ENCODE measurements at regions of chr10 and their contacts with region 1.

Region 1: DNA sequence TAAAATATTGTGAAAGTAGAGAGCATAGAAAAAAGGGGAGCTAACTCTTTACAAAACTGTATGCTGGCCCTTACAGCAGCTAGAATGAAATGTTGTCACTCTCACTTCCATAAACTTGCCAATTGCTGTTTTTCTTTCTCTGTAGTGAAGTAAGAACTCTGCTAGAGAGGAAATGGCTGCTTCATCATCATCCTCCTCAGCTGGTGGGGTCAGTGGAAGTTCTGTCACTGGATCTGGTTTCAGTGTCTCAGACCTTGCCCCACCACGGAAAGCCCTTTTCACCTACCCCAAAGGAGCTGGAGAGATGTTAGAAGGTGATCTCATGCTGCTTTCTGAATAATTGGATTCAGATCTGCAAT is 7.6 kb upstream of the ASCC1 start:
- DNase-seq: no peak
- H3K27ac ChIP-seq: no peak overlapping the region
- CTCF ChIP-seq: no peak

Region 2: DNA sequence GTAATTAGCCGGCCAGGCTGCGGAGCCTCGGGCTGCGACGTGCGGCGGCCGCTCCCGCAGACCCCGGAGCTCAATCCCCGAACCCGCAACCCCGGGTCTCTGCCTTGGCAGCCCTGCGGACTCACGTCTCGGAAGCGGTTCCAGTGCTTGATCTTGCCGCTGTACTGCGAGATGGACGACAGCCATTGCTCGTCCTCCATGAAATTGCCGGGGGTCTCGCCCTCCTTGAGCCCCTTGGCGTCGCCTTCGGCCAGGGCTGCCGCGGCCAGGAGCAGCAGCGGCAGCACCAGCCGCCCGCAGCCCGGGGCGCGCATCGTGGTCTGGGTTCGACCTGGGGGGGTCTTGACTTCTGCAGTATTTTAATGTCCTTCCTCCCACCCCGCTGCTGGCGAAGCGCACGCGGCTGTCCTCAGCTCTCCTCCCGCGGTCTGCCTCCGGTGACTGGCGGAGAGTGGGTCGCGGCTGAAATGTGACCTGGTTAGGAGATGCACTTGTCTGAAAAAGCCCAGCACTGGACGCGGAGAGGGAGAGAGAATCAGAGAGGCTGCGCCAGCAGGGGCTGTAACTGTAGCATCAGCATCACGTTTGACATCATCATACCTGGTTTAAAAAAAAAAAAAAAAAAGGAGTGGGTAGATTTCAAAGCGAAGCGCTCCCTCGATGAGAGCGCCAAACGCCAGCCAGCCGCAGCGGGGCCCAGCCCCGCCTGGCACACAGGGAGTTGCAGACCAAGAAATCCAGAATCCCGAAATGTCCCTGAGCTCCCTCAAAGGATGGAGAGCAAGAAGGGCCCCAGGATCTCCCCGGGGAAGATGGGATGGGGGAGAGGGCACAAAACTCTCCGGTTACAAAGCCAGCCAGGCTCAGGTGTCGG is 135.5 kb before region 1 on chr10 and contains the start of gene SPOCK2:
- CTCF ChIA-PET with region 1: no interaction called
- POLR2A ChIA-PET with region 1: no interaction called
- DNase-seq: no peak
- H3K27ac ChIP-seq: no peak within 1 kb of the TSS
- CTCF ChIP-seq: no peak

Region 3: GRCh38 chr10:72126184-72126871 is 97.4 kb before region 1 on chr10:
- CTCF ChIA-PET with region 1: interaction called, 16 read pairs
- POLR2A ChIA-PET with region 1: interaction called, 4 read pairs
- DNase-seq: peak; percentile 64
- H3K27ac ChIP-seq: no peak overlapping the region
- CTCF ChIP-seq: no peak; the same call in 1 of the 2 replicates

Region 4: DNA sequence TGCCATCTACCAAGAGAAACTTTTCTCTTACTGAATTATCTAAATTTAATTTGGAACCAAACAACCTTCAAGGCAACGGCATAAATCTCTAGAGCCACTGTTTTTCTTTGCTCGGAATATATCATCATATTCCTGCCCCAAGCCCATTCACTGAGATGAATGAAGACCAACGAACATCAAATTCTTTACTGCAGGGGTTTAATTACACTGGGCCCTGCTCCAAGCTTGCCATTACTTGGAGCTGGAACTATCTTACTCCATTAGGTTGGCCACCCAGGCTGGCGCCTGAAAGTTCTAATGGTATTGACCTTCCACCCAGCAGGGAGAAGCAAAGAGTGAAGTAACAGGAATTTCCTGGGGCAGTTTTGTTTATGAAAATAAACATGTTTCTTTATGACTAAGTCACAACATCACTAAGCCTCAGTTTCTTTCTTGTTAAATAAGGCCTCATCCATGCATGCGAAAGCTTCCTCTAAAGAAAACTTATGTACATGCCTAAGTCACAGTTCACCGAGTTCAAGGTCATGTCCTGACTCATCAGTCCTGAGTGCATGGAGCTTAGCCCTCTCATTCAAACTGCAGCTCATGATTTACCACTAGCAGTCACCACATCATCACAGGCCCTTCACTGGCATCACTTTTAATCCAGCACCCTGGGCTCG is 50.0 kb before region 1 on chr10:
- CTCF ChIA-PET with region 1: no interaction called
- POLR2A ChIA-PET with region 1: no interaction called
- DNase-seq: no peak
- H3K27ac ChIP-seq: no peak overlapping the region
- CTCF ChIP-seq: no peak

Measured in RWPE1 (cell line).